IMR-90 (cell line): ENCODE measurements at regions of chr3 and their contacts with region 1.

Region 1: DNA sequence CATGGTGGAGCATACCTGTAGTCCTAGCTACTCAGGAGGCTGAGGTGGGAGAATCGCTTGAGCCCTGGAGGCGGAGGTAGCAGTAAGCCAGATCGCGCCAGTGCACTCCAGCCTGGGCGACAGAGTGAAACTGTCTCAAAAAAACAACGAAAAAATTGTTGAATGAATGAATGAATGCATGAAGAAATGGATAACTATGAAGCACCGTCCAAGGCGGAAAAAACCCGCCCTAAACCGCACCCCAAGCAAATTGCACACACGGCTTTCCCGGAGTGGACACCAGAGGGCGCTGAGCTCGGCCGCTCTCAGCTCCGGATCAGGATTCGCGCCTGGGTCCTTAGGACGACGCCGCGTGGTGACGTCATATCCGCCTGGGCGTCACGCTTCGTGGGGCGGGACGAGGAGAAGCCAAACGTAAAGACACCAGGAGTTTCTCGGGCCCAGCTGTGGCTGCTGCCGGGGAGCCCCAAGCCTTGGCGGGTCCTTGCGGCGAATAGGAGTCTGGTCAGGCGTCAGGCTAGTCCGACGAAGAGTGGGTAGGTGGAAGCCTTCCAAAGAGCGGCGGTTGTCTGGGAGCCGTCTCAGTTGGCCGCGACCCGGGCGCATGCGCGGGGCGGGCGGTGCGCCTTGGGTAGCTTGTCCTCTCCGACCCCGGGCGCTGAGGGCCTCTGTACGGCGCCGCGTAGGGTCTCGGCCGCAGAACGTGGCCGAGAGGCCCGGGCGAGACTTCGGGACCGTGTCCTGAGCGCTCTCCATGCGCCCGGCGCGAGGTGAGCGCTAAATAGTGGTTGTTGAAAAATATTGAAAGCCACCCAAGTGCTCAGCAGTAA is at the starts of genes HTD2 and RPP14:
- DNase-seq: peak; percentile 97
- ATAC-seq: peak; percentile 92
- H3K4me3 ChIP-seq: peak within 1 kb of the TSS; percentile 74
- H3K27ac ChIP-seq: peak within 1 kb of the TSS; percentile 94
- H3K4me1 ChIP-seq: peaks cover 6% of the 10 kb centered on the region
- H3K27me3 ChIP-seq: peaks cover 9% of the 10 kb centered on the region
- CTCF ChIP-seq: peak; percentile 98
- POLR2A ChIP-seq: peak; percentile 92
- RAD21 ChIP-seq: peak; percentile 42
- total RNA-seq, gene HTD2: 11.4 and 13.3 TPM in 2 replicates
- total RNA-seq, gene RPP14: 6.6 and 11.9 TPM in 2 replicates

Region 2: GRCh38 chr3:58188173-58188564 is 117.9 kb before region 1 on chr3:
- CTCF ChIA-PET with region 1: interaction called, 19 read pairs
- POLR2A ChIA-PET with region 1: no interaction called
- dilution Hi-C with region 1: no loop called
- in situ Hi-C with region 1: loop called (anchors 5 kb)
- intact Hi-C with region 1: no loop called
- DNase-seq: no peak
- ATAC-seq: no peak; the same call in 1 of the 2 replicates
- H3K4me3 ChIP-seq: no peak overlapping the region
- H3K27ac ChIP-seq: no peak overlapping the region
- H3K4me1 ChIP-seq: no peaks in the 10 kb centered on the region
- H3K27me3 ChIP-seq: peaks cover 6% of the 10 kb centered on the region
- CTCF ChIP-seq: no peak
- POLR2A ChIP-seq: no peak
- RAD21 ChIP-seq: no peak

Region 3: GRCh38 chr3:58317811-58318210 is 11.7 kb after region 1 on chr3:
- CTCF ChIA-PET with region 1: interaction called, 17 read pairs
- POLR2A ChIA-PET with region 1: no interaction called
- dilution Hi-C with region 1: no loop called
- in situ Hi-C with region 1: no loop called
- intact Hi-C with region 1: no loop called
- DNase-seq: no peak
- ATAC-seq: no peak
- H3K4me3 ChIP-seq: no peak overlapping the region
- H3K27ac ChIP-seq: no peak overlapping the region
- H3K4me1 ChIP-seq: no peaks in the 10 kb centered on the region
- H3K27me3 ChIP-seq: no peaks in the 10 kb centered on the region
- CTCF ChIP-seq: no peak
- POLR2A ChIP-seq: no peak
- RAD21 ChIP-seq: no peak

Region 4: GRCh38 chr3:58471025-58471887 is 165.2 kb after region 1 on chr3:
- CTCF ChIA-PET with region 1: no interaction called
- POLR2A ChIA-PET with region 1: no interaction called
- dilution Hi-C with region 1: no loop called
- in situ Hi-C with region 1: no loop called
- intact Hi-C with region 1: no loop called
- DNase-seq: peak; percentile 83
- ATAC-seq: peak; percentile 88
- H3K4me3 ChIP-seq: no peak overlapping the region
- H3K27ac ChIP-seq: peak overlapping the region; percentile 61
- H3K4me1 ChIP-seq: peaks cover 14% of the 10 kb centered on the region
- H3K27me3 ChIP-seq: 0 out of 2 replicates have a peak, but pooled peaks cover 1% of the 10 kb centered on the region
- CTCF ChIP-seq: no peak
- POLR2A ChIP-seq: no peak
- RAD21 ChIP-seq: no peak